ENCODE measurements at regions of chr19 and their contacts with region 1.

Region 1: DNA sequence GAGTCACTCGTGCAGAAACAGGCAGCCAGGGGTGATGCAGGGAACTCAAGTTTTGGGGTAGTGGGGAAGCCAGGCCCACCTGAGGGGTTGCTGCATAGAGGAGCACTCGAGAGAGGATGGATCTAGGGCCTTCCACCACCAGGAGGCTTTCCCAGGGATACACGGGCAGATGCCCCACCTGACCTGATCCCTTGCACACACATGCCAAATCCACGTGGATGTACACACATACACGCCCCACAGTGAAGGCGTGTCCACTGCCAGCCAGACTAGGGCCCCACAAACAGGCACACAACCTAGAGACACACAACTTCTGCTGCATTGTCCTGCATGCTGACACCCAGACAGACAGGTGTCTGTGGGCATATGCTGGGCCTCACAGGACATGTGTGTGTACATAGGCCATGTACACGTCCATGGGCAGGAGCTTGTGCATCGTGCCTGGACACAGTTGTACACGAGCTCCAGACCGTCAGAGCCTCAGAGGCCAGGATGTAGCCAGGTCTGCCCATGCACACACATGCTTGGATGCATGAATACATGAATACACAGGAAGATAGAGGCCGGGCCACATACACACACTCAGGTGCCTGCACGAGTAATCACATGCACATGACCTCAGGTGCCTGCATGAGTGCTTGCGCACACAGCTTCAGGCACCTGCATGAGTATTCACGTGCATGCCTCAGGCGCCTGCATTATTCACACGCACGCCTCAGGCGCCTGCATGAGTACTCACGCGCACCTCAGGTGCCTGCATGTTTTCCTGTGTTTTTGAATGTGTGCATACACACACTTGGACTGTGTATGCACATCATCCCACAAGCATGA is 8.9 kb downstream of the CCDC97 start:
- DNase-seq: no peak
- H3K4me3 ChIP-seq: no peak overlapping the region
- H3K27ac ChIP-seq: no peak overlapping the region
- H3K4me1 ChIP-seq: peaks cover 31% of the 10 kb centered on the region
- H3K27me3 ChIP-seq: no peaks in the 10 kb centered on the region
- CTCF ChIP-seq: no peak
- POLR2A ChIP-seq: no peak

Region 2: GRCh38 chr19:41353466-41354342 is 34.8 kb after region 1 on chr19 and contains the start of gene TGFB1:
- intact Hi-C with region 1: loop called (anchors 5 kb)
- DNase-seq: no peak
- H3K4me3 ChIP-seq: peak within 1 kb of the TSS; percentile 61 to 80
- H3K27ac ChIP-seq: peak within 1 kb of the TSS; percentile 95
- H3K4me1 ChIP-seq: peaks cover 35% of the 10 kb centered on the region
- H3K27me3 ChIP-seq: no peaks in the 10 kb centered on the region
- CTCF ChIP-seq: peak; percentile 67 to 93 (median 68)
- POLR2A ChIP-seq: peak in 1 of 2 donors; percentile 66
- total RNA-seq, gene TGFB1: 53.3 TPM

Region 3: DNA sequence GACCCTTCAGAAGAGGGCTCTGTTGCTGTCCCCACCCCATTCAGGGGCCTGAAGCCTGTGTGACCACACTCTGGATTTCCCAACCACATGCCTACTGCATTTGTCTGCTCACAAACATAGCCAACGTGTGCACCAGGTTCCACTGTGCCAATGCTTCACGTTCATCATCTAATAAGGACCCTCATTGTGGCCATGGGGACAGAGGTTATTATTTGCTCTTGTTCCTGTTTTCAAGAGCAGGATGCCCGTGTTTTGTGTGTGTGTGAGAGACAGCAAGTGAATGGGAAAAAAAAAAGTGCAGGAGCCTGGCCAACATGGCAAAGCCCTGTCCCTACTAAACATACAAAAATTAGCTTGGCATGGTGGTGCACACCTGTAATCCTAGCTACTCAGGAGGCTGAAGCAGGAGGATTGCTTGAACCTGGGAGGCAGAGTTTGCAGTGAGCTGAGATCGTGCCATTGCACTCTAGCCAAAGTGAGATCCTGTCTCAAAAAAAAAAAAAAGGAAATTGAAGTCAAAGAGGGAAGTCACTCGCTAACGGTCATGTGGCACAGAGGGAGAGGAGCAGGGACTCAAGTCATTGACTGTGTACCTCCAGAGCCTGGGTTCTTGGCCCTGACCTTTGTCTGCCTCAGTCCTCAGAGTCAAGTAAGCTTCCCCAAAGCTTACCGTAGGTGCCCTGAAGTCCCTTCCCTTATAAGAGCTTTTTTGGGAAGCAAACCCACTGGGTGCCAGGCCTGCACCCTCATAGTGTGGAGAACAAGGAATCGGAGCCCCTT is 101.4 kb after region 1 on chr19:
- intact Hi-C with region 1: no loop called
- DNase-seq: no peak
- H3K4me3 ChIP-seq: no peak overlapping the region
- H3K27ac ChIP-seq: no peak overlapping the region
- H3K4me1 ChIP-seq: peaks cover 9% of the 10 kb centered on the region
- H3K27me3 ChIP-seq: no peaks in the 10 kb centered on the region
- CTCF ChIP-seq: no peak
- POLR2A ChIP-seq: no peak